ENCODE measurements at regions of chr3 and their contacts with region 1.

Region 1: GRCh38 chr3:59450946-59451763 is 401.3 kb upstream of the CFAP20DC start:
- DNase-seq: peak; percentile 97
- ATAC-seq: peak; percentile 93
- H3K4me3 ChIP-seq: peak overlapping the region; percentile 41; the same call in 1 of the 2 replicates
- H3K27ac ChIP-seq: peak overlapping the region; percentile 87
- H3K4me1 ChIP-seq: peaks cover 34% of the 10 kb centered on the region
- H3K27me3 ChIP-seq: no peaks in the 10 kb centered on the region
- CTCF ChIP-seq: no peak
- EP300 ChIP-seq: peak; percentile 85 to 95; a peak in 3 of 4 replicates
- POLR2A ChIP-seq: peak; percentile 40; the same call in 1 of the 2 replicates
- RAD21 ChIP-seq: peak; percentile 16; the same call in 1 of the 2 replicates

Region 2: GRCh38 chr3:59235634-59236012 is 215.5 kb before region 1 on chr3:
- CTCF ChIA-PET with region 1: no interaction called
- POLR2A ChIA-PET with region 1: interaction called, 3 read pairs
- RAD21 ChIA-PET with region 1: interaction called, 10 read pairs
- SMC1A ChIA-PET with region 1: interaction called, 11 read pairs
- in situ Hi-C with region 1: no loop called
- intact Hi-C with region 1: no loop called
- DNase-seq: peak; percentile 46
- ATAC-seq: peak; percentile 94
- H3K4me3 ChIP-seq: no peak overlapping the region
- H3K27ac ChIP-seq: no peak overlapping the region
- H3K4me1 ChIP-seq: peaks cover 3% of the 10 kb centered on the region
- H3K27me3 ChIP-seq: no peaks in the 10 kb centered on the region
- CTCF ChIP-seq: no peak
- EP300 ChIP-seq: peak; percentile 56 to 81; a peak in 3 of 4 replicates
- POLR2A ChIP-seq: no peak
- RAD21 ChIP-seq: no peak

Region 3: GRCh38 chr3:59245859-59246501 is 205.2 kb before region 1 on chr3:
- CTCF ChIA-PET with region 1: interaction called, 3 read pairs
- POLR2A ChIA-PET with region 1: no interaction called
- RAD21 ChIA-PET with region 1: interaction called, 4 read pairs
- SMC1A ChIA-PET with region 1: interaction called, 35 read pairs
- in situ Hi-C with region 1: no loop called
- intact Hi-C with region 1: loop called (anchors 2 kb)
- DNase-seq: no peak
- ATAC-seq: no peak
- H3K4me3 ChIP-seq: no peak overlapping the region
- H3K27ac ChIP-seq: peak overlapping the region; percentile 25; the same call in 1 of the 2 replicates
- H3K4me1 ChIP-seq: peaks cover 18% of the 10 kb centered on the region
- H3K27me3 ChIP-seq: no peaks in the 10 kb centered on the region
- CTCF ChIP-seq: no peak
- EP300 ChIP-seq: no peak
- POLR2A ChIP-seq: no peak
- RAD21 ChIP-seq: no peak

Region 4: DNA sequence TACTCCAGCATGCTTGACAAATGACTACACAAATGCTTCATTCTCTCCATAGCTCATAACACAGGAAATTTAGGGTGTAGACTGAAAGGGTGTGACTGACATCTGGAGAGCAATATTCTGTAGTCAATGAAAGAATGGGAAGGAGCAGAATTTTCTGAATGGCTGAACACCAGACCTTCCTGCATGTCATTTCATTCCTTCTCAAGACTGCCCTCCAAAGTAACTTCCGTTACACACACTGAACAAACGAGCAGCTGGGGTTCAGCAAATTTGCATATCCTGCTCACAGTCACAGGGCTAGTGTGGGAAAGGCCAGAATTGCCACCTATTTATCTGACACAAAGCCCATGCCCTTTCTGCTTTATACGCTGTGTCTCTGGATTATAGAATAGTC is 76.3 kb before region 1 on chr3:
- CTCF ChIA-PET with region 1: interaction called, 3 read pairs
- POLR2A ChIA-PET with region 1: interaction called, 4 read pairs
- RAD21 ChIA-PET with region 1: interaction called, 11 read pairs
- SMC1A ChIA-PET with region 1: interaction called, 11 read pairs
- in situ Hi-C with region 1: no loop called
- intact Hi-C with region 1: no loop called
- DNase-seq: peak; percentile 91
- ATAC-seq: peak; percentile 99
- H3K4me3 ChIP-seq: no peak overlapping the region
- H3K27ac ChIP-seq: no peak overlapping the region
- H3K4me1 ChIP-seq: peaks cover 9% of the 10 kb centered on the region
- H3K27me3 ChIP-seq: no peaks in the 10 kb centered on the region
- CTCF ChIP-seq: no peak; a peak in 1 of 6 replicates
- EP300 ChIP-seq: 0 out of 4 replicates have a peak, but pooled peaks of 1 of the 2 experiments have one; percentile 57
- POLR2A ChIP-seq: no peak
- RAD21 ChIP-seq: peak; percentile 31; the same call in 1 of the 2 replicates

Region 5: GRCh38 chr3:59406943-59407342 is 44.2 kb before region 1 on chr3:
- CTCF ChIA-PET with region 1: no interaction called
- POLR2A ChIA-PET with region 1: no interaction called
- RAD21 ChIA-PET with region 1: interaction called, 11 read pairs
- SMC1A ChIA-PET with region 1: interaction called, 4 read pairs
- in situ Hi-C with region 1: no loop called
- intact Hi-C with region 1: no loop called
- DNase-seq: peak; percentile 53
- ATAC-seq: peak; percentile 91
- H3K4me3 ChIP-seq: no peak overlapping the region; the same call in 1 of the 2 replicates
- H3K27ac ChIP-seq: peak overlapping the region; percentile 30
- H3K4me1 ChIP-seq: peaks cover 19% of the 10 kb centered on the region
- H3K27me3 ChIP-seq: no peaks in the 10 kb centered on the region
- CTCF ChIP-seq: no peak
- EP300 ChIP-seq: no peak
- POLR2A ChIP-seq: no peak
- RAD21 ChIP-seq: no peak

Region 6: DNA sequence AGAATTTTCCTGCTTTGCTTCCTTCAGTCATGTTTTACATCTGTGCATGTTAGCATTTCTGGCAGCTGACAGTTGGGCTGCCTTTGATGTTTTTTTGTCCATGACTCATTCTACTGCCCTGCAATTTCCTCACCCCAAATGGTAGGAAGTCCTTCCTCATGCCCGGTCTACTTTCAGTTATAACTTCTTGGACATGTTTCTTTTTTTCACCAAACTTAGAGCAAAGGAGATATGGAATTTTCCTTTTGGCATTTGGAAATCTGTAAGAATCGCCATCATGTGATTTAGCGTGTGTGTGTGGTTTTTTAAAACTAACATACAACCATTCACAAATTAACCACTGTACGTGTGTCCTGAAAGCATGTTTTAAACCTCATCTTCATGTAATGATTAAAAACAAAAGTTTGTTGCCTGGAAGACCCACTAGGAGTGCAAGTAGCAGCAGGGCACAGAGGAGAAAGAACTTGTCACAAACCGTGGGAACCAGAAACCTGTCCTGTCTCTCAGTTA is 29.4 kb after region 1 on chr3:
- CTCF ChIA-PET with region 1: no interaction called
- POLR2A ChIA-PET with region 1: interaction called, 3 read pairs
- RAD21 ChIA-PET with region 1: interaction called, 13 read pairs
- SMC1A ChIA-PET with region 1: interaction called, 11 read pairs
- in situ Hi-C with region 1: no loop called
- intact Hi-C with region 1: loop called (anchors 1 kb)
- DNase-seq: peak; percentile 49
- ATAC-seq: peak; percentile 92
- H3K4me3 ChIP-seq: no peak overlapping the region; the same call in 1 of the 2 replicates
- H3K27ac ChIP-seq: peak overlapping the region; percentile 71
- H3K4me1 ChIP-seq: peaks cover 15% of the 10 kb centered on the region
- H3K27me3 ChIP-seq: no peaks in the 10 kb centered on the region
- CTCF ChIP-seq: 0 out of 6 replicates have a peak, but pooled peaks of 1 of the 3 experiments have one; percentile 12
- EP300 ChIP-seq: peak; percentile 39 to 56; a peak in 2 of 4 replicates
- POLR2A ChIP-seq: no peak
- RAD21 ChIP-seq: peak; percentile 48

Region 7: DNA sequence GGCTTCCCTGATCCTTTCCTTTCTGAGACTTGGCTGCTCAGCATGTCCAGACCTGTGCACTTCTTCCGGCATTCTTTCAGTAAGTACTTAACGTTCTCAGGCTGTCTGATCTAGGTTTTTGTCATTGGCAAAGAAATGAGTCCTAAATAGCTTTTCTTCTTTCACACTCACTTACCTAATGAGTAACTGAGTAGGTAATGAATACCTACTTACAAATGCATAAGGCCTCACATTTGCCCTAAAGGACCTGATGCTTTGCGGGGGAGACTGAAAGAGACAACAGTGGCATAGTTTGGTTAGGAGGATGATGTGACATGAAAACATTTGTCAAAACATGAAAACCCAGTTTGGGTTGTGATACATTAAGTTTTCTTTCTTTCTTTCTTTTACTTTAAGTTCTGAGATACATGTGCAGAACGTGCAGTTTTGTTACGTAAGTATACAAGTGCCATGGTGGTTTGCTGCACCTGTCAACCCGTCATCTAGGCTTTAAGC is 115.4 kb after region 1 on chr3:
- CTCF ChIA-PET with region 1: interaction called, 8 read pairs
- POLR2A ChIA-PET with region 1: interaction called, 6 read pairs
- RAD21 ChIA-PET with region 1: interaction called, 41 read pairs
- SMC1A ChIA-PET with region 1: interaction called, 44 read pairs
- in situ Hi-C with region 1: no loop called
- intact Hi-C with region 1: loop called (anchors 2 kb)
- DNase-seq: peak; percentile 68
- ATAC-seq: peak; percentile 98
- H3K4me3 ChIP-seq: no peak overlapping the region
- H3K27ac ChIP-seq: peak overlapping the region; percentile 54
- H3K4me1 ChIP-seq: peaks cover 32% of the 10 kb centered on the region
- H3K27me3 ChIP-seq: no peaks in the 10 kb centered on the region
- CTCF ChIP-seq: no peak
- EP300 ChIP-seq: peak; percentile 87 to 93; a peak in 3 of 4 replicates
- POLR2A ChIP-seq: no peak
- RAD21 ChIP-seq: no peak